Breast epithelium (tissue), 4 donors: ENCODE measurements at regions of chr12 and their contacts with region 1.

Region 1: GRCh38 chr12:93153321-93153720 is 224.2 kb upstream of the EEA1 start:
- DNase-seq: no peak
- H3K4me3 ChIP-seq: no peak overlapping the region
- H3K27ac ChIP-seq: no peak overlapping the region
- H3K4me1 ChIP-seq: no peaks in the 10 kb centered on the region
- H3K27me3 ChIP-seq: no peaks in the 10 kb centered on the region
- CTCF ChIP-seq: no peak
- POLR2A ChIP-seq: no peak

Region 2: GRCh38 chr12:92899388-92900001 is 253.8 kb before region 1 on chr12:
- intact Hi-C with region 1: loop called (anchors 5 kb)
- DNase-seq: peak; percentile 55 to 78
- H3K4me3 ChIP-seq: peak overlapping the region in 2 of 3 donors; percentile 25 to 42
- H3K27ac ChIP-seq: peak overlapping the region; percentile 76 to 92
- H3K4me1 ChIP-seq: no peaks in the 10 kb centered on the region
- H3K27me3 ChIP-seq: no peaks in the 10 kb centered on the region
- CTCF ChIP-seq: no peak
- POLR2A ChIP-seq: no peak

Region 3: GRCh38 chr12:93115646-93116045 is 37.7 kb before region 1 on chr12:
- intact Hi-C with region 1: loop called (anchors 2 kb)
- DNase-seq: no peak
- H3K4me3 ChIP-seq: no peak overlapping the region
- H3K27ac ChIP-seq: no peak overlapping the region
- H3K4me1 ChIP-seq: no peaks in the 10 kb centered on the region
- H3K27me3 ChIP-seq: no peaks in the 10 kb centered on the region
- CTCF ChIP-seq: no peak
- POLR2A ChIP-seq: no peak

Region 4: DNA sequence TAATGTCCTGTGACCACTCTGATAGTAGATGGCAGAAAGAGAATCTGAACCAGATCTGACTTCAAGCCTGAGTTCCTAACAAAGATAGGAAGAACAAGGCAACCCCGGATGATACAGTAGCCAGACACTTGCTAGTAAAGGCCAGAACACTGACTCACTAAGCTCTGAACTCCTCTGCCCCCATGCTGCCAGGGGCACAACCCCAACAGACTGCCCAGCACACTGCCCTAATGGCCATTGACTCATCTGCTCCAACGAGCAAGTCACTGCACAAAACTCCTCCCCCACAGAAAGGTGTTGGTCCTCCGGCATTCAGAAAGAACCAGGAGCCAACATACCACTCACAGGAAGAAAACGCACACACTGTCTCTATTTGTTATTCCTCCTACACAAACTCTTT is 44.8 kb after region 1 on chr12:
- intact Hi-C with region 1: no loop called
- DNase-seq: no peak
- H3K4me3 ChIP-seq: no peak overlapping the region
- H3K27ac ChIP-seq: no peak overlapping the region
- H3K4me1 ChIP-seq: no peaks in the 10 kb centered on the region
- H3K27me3 ChIP-seq: no peaks in the 10 kb centered on the region
- CTCF ChIP-seq: no peak
- POLR2A ChIP-seq: no peak

Region 5: GRCh38 chr12:93223440-93224426 is 70.4 kb after region 1 on chr12:
- intact Hi-C with region 1: no loop called
- DNase-seq: no peak
- H3K4me3 ChIP-seq: no peak overlapping the region
- H3K27ac ChIP-seq: no peak overlapping the region
- H3K4me1 ChIP-seq: no peaks in the 10 kb centered on the region
- H3K27me3 ChIP-seq: no peaks in the 10 kb centered on the region
- CTCF ChIP-seq: no peak
- POLR2A ChIP-seq: no peak